ENCODE measurements at regions of chr7 and their contacts with region 1.

Region 1: GRCh38 chr7:82729172-82730030 is 285.8 kb upstream of the CACNA2D1 start:
- DNase-seq: no peak
- H3K4me3 ChIP-seq: no peak overlapping the region
- H3K27ac ChIP-seq: no peak overlapping the region
- H3K4me1 ChIP-seq: peaks cover 0 to 17% (median 2%) of the 10 kb centered on the region in 4 donors
- H3K27me3 ChIP-seq: no peaks in the 10 kb centered on the region
- CTCF ChIP-seq: peak; percentile 46 to 60 (median 55)
- EP300 ChIP-seq: no peak
- POLR2A ChIP-seq: no peak

Region 2: GRCh38 chr7:81549484-81550016 is 1179.9 kb before region 1 on chr7:
- in situ Hi-C with region 1: no loop called
- intact Hi-C with region 1: no loop called
- DNase-seq: no peak
- H3K4me3 ChIP-seq: no peak overlapping the region
- H3K27ac ChIP-seq: no peak overlapping the region
- H3K4me1 ChIP-seq: no peaks in the 10 kb centered on the region
- H3K27me3 ChIP-seq: no peaks in the 10 kb centered on the region
- CTCF ChIP-seq: no peak
- EP300 ChIP-seq: no peak
- POLR2A ChIP-seq: no peak

Region 3: GRCh38 chr7:82044497-82045080 is 684.8 kb before region 1 on chr7:
- in situ Hi-C with region 1: loop called in 3 of 4 experiments (anchors 10 to 25 kb)
- intact Hi-C with region 1: no loop called
- DNase-seq: peak; percentile 14
- H3K4me3 ChIP-seq: no peak overlapping the region
- H3K27ac ChIP-seq: no peak overlapping the region
- H3K4me1 ChIP-seq: peaks cover 0 to 5% (median 0%) of the 10 kb centered on the region in 4 donors
- H3K27me3 ChIP-seq: no peaks in the 10 kb centered on the region
- CTCF ChIP-seq: peak; percentile 56 to 76 (median 61)
- EP300 ChIP-seq: no peak
- POLR2A ChIP-seq: no peak

Measured in transverse colon (tissue), 4 donors.